Endothelial cell of umbilical vein (primary cell): ENCODE measurements at regions of chr17 and their contacts with region 1.

Region 1: DNA sequence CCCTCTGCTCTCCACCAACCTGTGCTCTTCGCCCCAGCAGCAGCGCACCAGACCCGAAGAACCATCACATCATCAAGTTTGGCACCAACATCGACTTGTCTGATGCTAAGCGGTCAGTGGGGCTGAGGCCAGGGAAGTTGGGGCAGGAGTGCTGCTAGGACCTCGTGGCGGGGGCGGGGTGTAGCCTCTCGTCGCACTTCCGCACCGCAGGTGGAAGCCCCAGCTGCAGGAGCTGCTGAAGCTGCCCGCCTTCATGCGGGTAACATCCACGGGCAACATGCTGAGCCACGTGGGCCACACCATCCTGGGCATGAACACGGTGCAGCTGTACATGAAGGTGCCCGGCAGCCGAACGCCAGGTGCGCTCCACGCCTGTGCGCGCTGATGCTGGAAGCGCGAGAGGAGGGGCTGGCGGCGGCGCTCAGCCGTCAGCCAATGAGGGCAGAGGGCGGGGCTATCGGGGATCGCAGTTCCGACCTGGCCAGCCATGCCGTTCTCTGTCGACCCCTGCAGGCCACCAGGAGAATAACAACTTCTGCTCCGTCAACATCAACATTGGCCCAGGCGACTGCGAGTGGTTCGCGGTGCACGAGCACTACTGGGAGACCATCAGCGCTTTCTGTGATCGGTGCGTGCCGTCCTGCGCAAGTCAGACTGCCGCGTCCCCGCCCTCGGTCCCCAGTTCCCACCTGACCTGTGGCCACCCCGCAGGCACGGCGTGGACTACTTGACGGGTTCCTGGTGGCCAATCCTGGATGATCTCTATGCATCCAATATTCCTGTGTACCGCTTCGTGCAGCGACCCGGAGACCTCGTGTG is 3.2 kb upstream of the TMEM88 start:
- DNase-seq: peak; percentile 88
- H3K4me3 ChIP-seq: no peak overlapping the region
- H3K27ac ChIP-seq: no peak overlapping the region
- H3K4me1 ChIP-seq: peaks cover 20% of the 10 kb centered on the region
- H3K27me3 ChIP-seq: no peaks in the 10 kb centered on the region
- CTCF ChIP-seq: peak; percentile 91 to 98
- POLR2A ChIP-seq: no peak

Region 2: GRCh38 chr17:7818746-7819645 is 32.7 kb before region 1 on chr17:
- CTCF ChIA-PET with region 1: interaction called, 3 read pairs
- POLR2A ChIA-PET with region 1: no interaction called
- dilution Hi-C with region 1: no loop called
- intact Hi-C with region 1: loop called (anchors 1 kb)
- DNase-seq: no peak
- H3K4me3 ChIP-seq: no peak overlapping the region
- H3K27ac ChIP-seq: no peak overlapping the region
- H3K4me1 ChIP-seq: no peaks in the 10 kb centered on the region
- H3K27me3 ChIP-seq: peaks cover 9 to 13% of the 10 kb centered on the region in 2 experiments
- CTCF ChIP-seq: no peak
- POLR2A ChIP-seq: no peak

Region 3: GRCh38 chr17:7982666-7983065 is 131.0 kb after region 1 on chr17:
- CTCF ChIA-PET with region 1: no interaction called
- POLR2A ChIA-PET with region 1: no interaction called
- dilution Hi-C with region 1: no loop called
- intact Hi-C with region 1: no loop called
- DNase-seq: peak; percentile 33
- H3K4me3 ChIP-seq: no peak overlapping the region
- H3K27ac ChIP-seq: no peak overlapping the region
- H3K4me1 ChIP-seq: peaks cover 4% of the 10 kb centered on the region
- H3K27me3 ChIP-seq: no peaks in the 10 kb centered on the region
- CTCF ChIP-seq: peak in 1 of 2 donors; percentile 8
- POLR2A ChIP-seq: no peak